Lower leg skin (tissue), 4 donors: ENCODE measurements at regions of chr13 and their contacts with region 1.

Region 1: GRCh38 chr13:30569901-30570576 is 47.7 kb upstream of the USPL1 start:
- DNase-seq: peak in 1 of 2 donors; percentile 49
- H3K4me3 ChIP-seq: no peak overlapping the region
- CTCF ChIP-seq: no peak
- POLR2A ChIP-seq: no peak

Region 2: DNA sequence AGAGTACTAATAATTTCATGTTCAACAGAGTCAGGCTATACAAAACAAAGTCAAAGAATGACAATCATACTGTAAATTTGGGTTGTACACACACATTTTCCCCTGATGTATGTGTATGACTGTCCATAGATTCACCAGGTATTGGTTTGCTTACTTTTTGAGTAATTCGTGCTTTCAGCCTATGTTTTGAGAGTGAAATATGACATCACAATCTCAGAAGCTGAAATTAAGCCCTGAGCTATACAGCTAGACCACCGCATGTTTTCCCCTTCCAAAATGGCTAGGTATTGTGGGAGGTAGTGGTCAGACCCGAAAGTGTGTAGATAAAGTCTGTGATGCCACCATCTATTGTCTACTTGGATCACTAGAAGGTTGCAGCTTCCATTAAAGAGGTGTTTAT is 365.5 kb before region 1 on chr13:
- intact Hi-C with region 1: loop called (anchors 5 kb)
- DNase-seq: no peak
- H3K4me3 ChIP-seq: no peak overlapping the region
- CTCF ChIP-seq: no peak
- POLR2A ChIP-seq: no peak

Region 3: GRCh38 chr13:30306762-30307193 is 263.3 kb before region 1 on chr13:
- intact Hi-C with region 1: no loop called
- DNase-seq: peak; percentile 92 to 98
- H3K4me3 ChIP-seq: peak overlapping the region; percentile 98
- CTCF ChIP-seq: no peak
- POLR2A ChIP-seq: no peak